ENCODE measurements at regions of chr2 and their contacts with region 1.

Region 1: GRCh38 chr2:20326163-20326780 is 24.4 kb downstream of the PUM2 start:
- DNase-seq: peak; percentile 62
- H3K4me3 ChIP-seq: no peak overlapping the region
- H3K27ac ChIP-seq: no peak overlapping the region
- H3K4me1 ChIP-seq: peaks cover 17% of the 10 kb centered on the region
- CTCF ChIP-seq: peak; percentile 96

Region 2: DNA sequence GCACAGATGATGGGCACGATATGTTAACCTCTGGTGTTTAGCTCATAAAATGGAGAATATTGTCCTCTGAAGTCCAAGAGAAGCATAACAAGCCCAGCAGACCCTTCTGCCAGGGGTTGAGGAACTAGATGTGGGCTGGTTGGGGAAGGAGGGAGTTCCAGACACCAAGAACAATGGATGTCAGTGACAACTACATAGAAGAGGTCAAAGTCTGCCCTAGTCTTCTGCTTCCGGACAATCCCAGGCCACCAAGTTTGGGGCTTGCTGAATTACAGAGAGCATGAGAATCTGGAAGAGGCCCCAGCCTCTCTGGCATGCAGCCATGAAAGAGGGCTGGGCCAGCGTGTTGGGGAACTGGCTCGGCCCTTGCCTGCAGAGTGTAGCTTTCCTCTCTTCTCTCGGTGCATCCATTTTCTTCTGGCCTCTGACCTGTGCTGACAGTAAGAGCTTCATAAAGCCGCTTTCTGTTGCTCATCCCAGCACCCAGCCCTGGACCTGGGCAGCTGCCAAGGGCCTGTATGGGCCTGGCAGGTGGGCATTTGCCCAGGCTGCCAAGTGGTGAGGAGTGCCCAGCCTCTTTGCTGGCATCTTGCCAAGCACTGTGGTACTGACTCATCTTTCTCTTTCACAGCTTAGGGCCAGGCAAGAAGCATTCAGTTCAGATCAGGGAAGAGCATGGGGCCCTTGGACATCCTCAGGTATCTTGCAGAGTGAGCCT is 260.2 kb before region 1 on chr2:
- CTCF ChIA-PET with region 1: no interaction called
- POLR2A ChIA-PET with region 1: no interaction called
- intact Hi-C with region 1: no loop called
- DNase-seq: no peak
- H3K4me3 ChIP-seq: no peak overlapping the region
- H3K27ac ChIP-seq: no peak overlapping the region
- H3K4me1 ChIP-seq: no peaks in the 10 kb centered on the region
- CTCF ChIP-seq: no peak

Region 3: DNA sequence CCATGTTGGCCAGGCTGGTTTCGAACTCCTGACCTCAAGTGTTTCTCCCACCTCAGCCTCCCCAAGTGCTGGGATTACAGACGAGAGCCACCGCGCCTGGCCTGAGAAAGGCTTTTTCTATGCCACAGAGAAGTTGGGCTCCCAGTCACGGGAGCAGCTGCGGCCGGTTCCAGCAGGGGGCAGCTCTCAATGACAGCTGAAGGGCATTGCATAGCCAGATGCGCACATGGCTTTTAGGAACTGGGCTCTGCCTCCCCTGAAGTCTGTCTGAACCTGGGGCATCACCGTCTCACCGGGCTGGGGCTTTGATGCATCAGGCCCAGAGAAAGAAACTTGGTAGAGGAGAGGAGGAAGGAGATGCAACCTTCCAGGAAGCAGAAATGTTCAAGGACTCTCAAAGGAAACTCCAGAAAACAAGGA is 190.6 kb before region 1 on chr2:
- CTCF ChIA-PET with region 1: no interaction called
- POLR2A ChIA-PET with region 1: no interaction called
- intact Hi-C with region 1: loop called (anchors 5 kb)
- DNase-seq: peak; percentile 55
- H3K4me3 ChIP-seq: no peak overlapping the region
- H3K27ac ChIP-seq: no peak overlapping the region
- H3K4me1 ChIP-seq: no peaks in the 10 kb centered on the region
- CTCF ChIP-seq: peak; percentile 76

Region 4: GRCh38 chr2:20343128-20343527 is 16.9 kb after region 1 on chr2:
- CTCF ChIA-PET with region 1: no interaction called
- POLR2A ChIA-PET with region 1: interaction called, 13 read pairs
- intact Hi-C with region 1: no loop called
- DNase-seq: no peak
- H3K4me3 ChIP-seq: no peak overlapping the region
- H3K27ac ChIP-seq: no peak overlapping the region
- H3K4me1 ChIP-seq: peaks cover 72% of the 10 kb centered on the region
- CTCF ChIP-seq: no peak

Region 5: DNA sequence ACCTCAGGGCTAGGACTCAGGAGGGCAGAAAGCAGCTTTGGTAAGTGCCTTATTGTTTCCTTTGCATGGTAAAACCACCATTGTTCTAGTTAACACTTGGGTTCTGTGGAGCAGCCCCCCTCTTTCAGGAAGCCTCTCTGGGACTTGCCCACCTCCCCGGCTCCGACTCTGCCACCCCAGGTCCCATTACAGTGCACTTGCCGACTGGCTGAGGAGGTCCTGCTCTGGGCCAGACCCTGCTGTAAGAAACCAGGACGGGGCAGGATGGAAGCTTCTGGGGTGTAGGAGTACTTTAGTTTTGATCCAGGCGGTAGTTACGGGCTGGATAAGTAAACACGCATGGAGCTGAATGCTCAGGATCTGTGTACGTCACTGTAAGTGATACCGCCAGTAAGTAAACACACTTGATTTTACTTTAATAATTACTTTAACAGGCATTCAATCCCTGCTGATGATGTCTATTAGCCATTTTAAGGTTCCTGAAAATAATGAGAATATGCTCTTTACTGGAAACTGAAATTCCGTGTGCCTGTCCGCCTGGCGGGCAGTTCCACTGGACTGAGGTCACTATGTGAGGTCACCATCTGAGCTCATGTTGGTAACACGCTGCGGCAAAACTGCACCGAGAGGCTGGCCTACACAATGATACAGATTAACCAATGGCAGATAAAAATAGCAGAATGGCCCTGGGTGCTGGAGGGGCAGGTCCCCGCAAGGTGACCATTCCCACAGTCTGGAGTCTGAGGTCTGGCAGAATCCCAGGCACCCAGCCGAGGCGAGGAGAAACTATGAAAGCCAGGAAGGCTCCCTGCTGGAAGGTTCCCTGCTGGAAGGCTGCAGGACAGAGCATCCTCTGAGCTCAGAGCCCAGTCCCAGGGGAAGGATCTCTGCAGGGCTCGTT is 299.5 kb after region 1 on chr2:
- CTCF ChIA-PET with region 1: no interaction called
- POLR2A ChIA-PET with region 1: no interaction called
- intact Hi-C with region 1: no loop called
- DNase-seq: no peak
- H3K4me3 ChIP-seq: no peak overlapping the region
- H3K27ac ChIP-seq: no peak overlapping the region
- H3K4me1 ChIP-seq: no peaks in the 10 kb centered on the region
- CTCF ChIP-seq: no peak

Measured in OCI-LY7 (cell line).